GM18951 (cell line): ENCODE measurements at regions of chr1 and their contacts with region 1.

Region 1: DNA sequence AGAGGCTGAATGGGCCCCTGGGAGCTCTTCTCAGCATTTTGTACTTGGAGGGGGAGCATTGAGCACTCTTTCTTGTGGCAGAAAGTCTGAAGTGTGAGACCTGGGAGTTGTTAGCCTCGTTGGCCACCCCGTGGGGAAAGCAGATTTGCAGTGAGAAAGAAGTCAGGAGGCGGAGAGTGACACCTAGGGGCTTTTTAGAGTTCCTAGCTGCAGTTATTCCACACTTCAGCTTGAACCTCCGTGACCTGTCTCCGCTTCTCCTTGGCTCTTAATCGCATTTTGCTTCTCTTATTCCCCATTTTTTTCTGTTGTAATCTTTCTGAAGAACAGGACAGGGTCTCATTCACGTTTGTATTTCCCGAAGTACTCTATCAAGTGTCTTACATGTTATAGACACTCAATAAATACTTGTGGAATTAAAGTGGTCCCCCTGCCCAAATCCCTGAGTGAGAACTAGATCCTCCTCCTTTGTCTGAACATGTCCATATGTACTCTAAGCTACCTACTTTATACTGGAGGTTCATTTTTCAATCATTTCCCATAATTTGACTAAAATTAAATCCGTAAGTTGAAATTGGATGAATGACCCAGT is 14.5 kb upstream of the C1orf141 start:
- POLR2A ChIP-seq: no peak

Region 2: DNA sequence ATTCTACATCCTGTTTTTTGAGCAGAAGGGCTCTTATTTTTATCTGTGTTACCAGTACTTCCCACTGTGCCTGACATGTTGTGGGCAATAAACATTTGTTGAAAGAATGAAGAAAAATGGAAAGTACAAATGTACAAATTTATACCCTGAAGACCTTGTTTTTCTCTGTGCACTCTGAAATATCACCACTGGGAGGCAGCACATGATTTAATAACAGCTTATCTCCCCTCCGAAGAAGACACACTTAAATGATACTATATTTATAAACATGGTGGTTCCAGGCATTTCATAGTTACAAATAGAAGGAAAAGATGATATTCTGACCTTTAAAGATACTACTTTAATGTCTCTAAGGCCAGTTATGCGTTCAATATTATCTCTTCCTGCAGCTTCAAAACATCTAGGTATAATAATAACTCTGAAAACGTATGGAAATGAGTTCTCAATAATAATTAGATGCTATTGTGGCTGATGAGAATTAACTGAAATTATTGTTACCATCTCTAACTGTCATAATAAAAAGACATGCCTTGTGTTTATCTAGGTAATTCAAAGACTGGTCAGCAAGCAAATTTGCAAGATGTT is 384.2 kb before region 1 on chr1:
- in situ Hi-C with region 1: loop called (anchors 10 kb)
- POLR2A ChIP-seq: no peak

Region 3: DNA sequence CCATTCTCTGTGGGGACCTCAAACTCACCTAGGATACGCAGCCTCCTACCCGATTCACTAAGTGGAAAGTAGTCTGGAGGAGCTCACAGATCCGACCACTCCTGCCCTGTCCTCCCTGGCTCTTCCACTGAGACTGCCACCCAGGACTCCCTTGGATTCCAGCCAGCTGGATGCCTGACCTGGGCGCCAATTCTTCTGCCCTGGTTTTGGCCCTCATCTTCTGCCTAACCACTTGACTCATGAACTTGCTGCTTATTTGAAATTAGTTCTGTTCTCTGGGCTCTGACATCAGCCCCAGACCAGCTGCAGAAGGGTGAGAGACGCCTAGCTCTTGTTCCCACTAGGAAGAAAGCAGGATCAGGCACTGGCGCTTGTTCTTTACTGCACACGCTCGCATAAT is 144.2 kb before region 1 on chr1:
- in situ Hi-C with region 1: loop called (anchors 10 kb)
- POLR2A ChIP-seq: no peak

Region 4: DNA sequence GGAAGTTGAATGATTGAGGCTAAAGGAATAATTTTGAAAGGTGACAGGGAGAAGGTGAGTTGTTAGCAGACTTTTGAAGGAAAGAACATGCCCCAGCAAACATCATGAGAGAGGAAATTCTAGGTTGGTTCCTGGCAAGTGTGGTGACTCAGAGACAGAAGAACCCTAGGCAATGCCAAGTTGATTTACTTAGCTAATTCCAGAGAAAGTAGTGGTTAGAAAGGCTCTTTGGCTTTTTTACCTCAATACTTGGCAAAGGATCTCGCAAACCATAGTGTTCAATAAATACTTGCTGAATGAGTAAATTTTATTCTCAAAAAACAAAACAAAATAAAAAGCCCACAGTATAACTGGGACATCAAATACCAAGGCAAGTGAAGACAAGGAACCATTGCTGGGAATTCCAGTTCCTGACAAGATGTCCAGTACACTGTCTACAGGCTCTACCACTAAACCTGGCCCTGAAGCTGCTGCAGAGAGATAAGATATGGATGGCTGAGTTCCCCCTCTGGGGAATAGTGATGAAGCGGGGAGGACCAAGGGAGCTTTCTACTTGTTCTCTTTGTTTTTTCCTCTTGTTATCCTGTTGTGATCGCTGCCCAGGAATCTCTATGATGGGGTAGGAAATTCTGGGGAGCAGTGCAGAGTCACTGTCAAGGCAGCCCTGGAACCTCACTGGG is 206.6 kb after region 1 on chr1:
- in situ Hi-C with region 1: no loop called
- POLR2A ChIP-seq: no peak